ENCODE measurements at regions of chr18 and their contacts with region 1.

Region 1: GRCh38 chr18:25364732-25365131 is 12.8 kb upstream of the ZNF521 start:
- DNase-seq: no peak
- ATAC-seq: no peak
- H3K4me3 ChIP-seq: no peak overlapping the region
- H3K4me3 Mint-ChIP-seq: no peak overlapping the region
- H3K27ac ChIP-seq: no peak overlapping the region
- H3K27ac Mint-ChIP-seq: no peak overlapping the region
- H3K4me1 ChIP-seq: no peaks in the 10 kb centered on the region
- H3K4me1 Mint-ChIP-seq: no peaks in the 10 kb centered on the region
- H3K27me3 ChIP-seq: peaks cover 0 to 3% of the 10 kb centered on the region in 2 experiments
- H3K27me3 Mint-ChIP-seq: peaks cover 17 to 43% of the 10 kb centered on the region in 2 donors

Region 2: DNA sequence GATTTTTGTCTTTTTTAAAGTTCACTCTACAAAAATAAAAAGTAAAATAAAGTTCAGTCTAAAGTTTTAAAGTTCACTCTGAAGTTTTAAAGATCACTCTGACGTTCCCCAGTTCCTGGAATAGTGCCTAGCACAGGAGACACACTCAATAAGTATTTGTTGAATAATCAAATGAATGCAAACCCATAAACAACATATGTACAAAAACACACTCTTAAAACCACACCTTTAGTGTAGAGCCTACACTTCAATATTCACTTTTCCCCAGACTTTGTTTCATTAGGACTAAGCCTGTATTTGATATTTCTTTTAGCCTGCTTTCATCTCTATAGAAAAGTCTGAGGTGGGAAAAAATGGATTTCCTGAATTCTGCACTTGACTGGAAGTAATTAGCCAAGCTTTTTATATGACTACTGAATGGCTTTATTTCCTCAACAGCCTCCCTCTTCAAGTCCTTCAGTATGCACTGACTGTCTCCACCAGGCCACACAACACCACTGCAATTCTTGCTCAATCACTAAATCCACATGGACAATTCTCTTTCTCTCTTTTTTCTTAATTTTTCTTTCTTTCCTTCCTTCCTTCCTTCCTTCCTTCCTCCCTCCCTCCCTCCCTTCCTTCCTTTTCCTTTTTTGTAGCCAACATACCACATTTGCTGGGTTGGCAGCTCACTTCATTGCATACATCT is 621.1 kb after region 1 on chr18:
- CTCF ChIA-PET with region 1: no interaction called
- POLR2A ChIA-PET with region 1: interaction called in 1 of 2 experiments, 11 read pairs
- DNase-seq: no peak
- ATAC-seq: no peak
- H3K4me3 ChIP-seq: no peak overlapping the region
- H3K4me3 Mint-ChIP-seq: no peak overlapping the region
- H3K27ac ChIP-seq: no peak overlapping the region
- H3K27ac Mint-ChIP-seq: no peak overlapping the region
- H3K4me1 ChIP-seq: no peaks in the 10 kb centered on the region
- H3K4me1 Mint-ChIP-seq: no peaks in the 10 kb centered on the region
- H3K27me3 ChIP-seq: no peaks in the 10 kb centered on the region
- H3K27me3 Mint-ChIP-seq: peaks cover 6 to 9% of the 10 kb centered on the region in 2 donors